CD4-positive, alpha-beta memory T cell (primary cell): ENCODE measurements at regions of chr13 and their contacts with region 1.

Region 1: DNA sequence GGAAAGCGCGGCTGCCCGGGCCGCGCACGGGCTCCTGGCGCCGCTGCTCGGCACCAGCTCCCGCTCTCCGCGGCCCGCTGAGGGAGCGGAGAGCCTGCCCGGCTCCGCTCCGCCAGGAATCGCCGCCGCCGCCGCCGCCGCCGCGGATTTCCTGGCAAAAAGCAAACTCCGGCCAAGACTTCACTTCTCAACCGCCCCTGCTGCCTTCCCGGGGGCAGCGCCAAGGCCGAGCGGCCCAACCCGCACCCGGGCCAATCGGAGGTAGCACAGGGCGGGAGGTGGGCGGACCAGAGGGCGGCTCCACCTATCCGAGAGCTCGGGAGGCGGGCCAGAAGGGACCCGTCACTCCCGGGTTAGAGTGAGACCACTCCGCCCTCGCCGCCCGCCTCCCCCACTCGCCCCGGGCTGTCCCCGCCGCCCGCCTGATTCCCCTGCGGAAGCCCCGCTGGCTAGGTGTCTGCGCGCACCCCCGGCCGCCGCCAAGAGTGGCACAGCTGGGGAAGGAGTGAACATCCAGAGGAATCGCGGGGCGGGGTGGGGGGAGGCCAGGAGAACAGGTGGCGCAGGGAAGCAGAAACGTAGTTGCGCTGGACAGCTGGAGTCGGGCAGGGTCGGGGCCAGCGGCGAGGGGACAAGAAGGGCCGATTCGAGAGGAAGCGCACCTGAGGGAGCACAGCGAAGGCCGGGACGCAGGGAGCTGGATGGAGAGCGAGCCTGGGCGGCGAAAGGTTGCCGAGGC is at the start of gene LNX2:
- DNase-seq: peak; percentile 95
- H3K4me3 ChIP-seq: peak within 1 kb of the TSS; percentile 66 to 95
- H3K4me3 Mint-ChIP-seq: peak within 1 kb of the TSS; percentile 90 to 97 (median 96)
- H3K27ac ChIP-seq: peak within 1 kb of the TSS; percentile 90
- H3K27ac Mint-ChIP-seq: peak within 1 kb of the TSS; percentile 95 to 98 (median 97)
- H3K4me1 ChIP-seq: peaks cover 60% of the 10 kb centered on the region
- H3K4me1 Mint-ChIP-seq: peaks cover 42 to 74% (median 59%) of the 10 kb centered on the region in 4 donors
- H3K27me3 ChIP-seq: no peaks in the 10 kb centered on the region
- H3K27me3 Mint-ChIP-seq: no peaks in the 10 kb centered on the region
- total RNA-seq, gene LNX2: 11.8 to 13.0 TPM

Region 2: DNA sequence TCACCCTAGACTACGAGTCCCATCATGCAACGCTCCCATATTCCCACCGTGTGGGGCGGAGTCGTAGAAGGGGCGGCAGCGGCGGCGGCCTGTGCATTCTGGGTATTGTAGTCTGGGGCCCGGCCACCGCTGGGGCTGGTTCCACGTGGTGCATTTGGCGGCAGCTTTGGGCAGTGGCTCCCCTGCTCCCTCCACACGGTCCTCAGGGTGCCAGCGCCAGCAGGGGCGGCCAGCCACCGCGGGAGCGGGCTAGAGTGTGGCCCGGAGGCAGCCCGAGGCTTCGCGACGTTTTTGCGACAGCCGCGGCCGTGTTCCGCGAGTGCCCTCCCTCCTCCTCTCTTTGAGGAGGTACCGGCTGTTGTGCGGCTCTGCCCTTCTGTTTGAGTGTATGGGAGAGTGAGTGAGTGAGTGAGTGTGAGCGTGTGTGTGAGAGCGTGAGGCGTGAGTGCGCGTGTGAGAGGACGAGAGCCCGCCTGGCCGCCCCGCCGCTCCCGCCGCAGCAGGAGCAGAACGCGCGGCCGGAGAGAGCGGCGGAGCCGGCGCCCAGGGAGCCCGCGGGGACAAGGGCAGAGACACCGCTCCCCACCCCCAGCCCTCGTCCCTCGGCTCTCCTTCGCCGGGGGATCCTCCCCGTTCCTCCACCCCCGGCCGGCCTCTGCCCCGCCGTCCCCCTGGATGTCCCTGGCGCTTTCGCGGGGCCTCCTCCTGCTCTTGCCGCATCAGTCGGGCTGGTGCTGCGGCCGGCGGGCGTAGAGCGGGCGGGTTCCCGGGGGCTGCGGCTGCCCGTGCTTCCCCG is 1366.6 kb before region 1 on chr13 and contains the start of gene CDK8:
- CTCF ChIA-PET with region 1: no interaction called
- POLR2A ChIA-PET with region 1: no interaction called
- intact Hi-C with region 1: loop called (anchors 2 kb)
- DNase-seq: peak; percentile 91 to 95 (median 92)
- H3K4me3 ChIP-seq: peak within 1 kb of the TSS; percentile 55 to 87
- H3K4me3 Mint-ChIP-seq: peak within 1 kb of the TSS; percentile 91 to 100 (median 94)
- H3K27ac ChIP-seq: peak within 1 kb of the TSS; percentile 58
- H3K27ac Mint-ChIP-seq: peak within 1 kb of the TSS; percentile 86 to 99 (median 93)
- H3K4me1 ChIP-seq: peaks cover 18% of the 10 kb centered on the region
- H3K4me1 Mint-ChIP-seq: peaks cover 29 to 44% (median 30%) of the 10 kb centered on the region in 4 donors
- H3K27me3 ChIP-seq: no peaks in the 10 kb centered on the region
- H3K27me3 Mint-ChIP-seq: peaks cover 0 to 1% of the 10 kb centered on the region in 2 donors
- total RNA-seq, gene CDK8: 10.4 to 11.7 TPM

Region 3: DNA sequence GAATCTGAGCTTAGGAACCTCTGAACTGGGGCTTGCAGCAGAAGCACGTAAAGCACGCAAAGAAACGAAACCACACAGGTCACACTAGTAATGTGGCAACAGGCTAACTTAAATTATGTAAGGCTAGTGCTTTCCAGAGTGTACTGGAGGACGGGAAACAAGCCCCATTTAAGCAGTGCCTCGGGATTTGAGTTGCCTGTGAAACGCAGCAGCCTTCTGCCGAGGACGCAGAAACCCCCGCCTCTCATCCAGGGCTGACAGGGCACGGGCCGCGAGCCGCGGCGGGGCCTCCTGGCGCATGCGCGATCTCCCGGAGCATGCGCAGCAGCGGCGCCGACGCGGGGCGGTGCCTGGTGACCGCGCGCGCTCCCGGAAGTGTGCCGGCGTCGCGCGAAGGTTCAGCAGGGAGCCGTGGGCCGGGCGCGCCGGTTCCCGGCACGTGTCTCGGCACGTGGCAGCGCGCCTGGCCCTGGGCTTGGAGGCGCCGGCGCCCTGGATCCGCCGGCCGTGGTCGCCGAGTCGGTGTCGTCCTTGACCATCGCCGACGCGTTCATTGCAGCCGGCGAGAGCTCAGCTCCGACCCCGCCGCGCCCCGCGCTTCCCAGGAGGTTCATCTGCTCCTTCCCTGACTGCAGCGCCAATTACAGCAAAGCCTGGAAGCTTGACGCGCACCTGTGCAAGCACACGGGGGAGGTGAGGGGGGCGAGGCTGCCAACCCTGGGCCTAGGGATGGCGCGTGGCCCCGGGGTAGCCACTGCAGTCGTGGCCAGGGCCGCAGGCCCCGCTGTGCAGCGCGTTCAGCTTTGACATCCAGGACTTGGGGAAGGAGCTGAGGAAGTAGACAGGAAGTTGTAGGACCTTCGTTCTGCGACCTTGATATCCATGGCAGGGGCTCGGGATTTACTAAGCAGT is 196.0 kb before region 1 on chr13 and contains the start of gene GTF3A:
- CTCF ChIA-PET with region 1: interaction called, 14 read pairs
- POLR2A ChIA-PET with region 1: interaction called, 135 read pairs
- intact Hi-C with region 1: loop called (anchors 1 kb)
- DNase-seq: peak; percentile 85 to 96 (median 92)
- H3K4me3 ChIP-seq: peak within 1 kb of the TSS; percentile 66 to 89
- H3K4me3 Mint-ChIP-seq: peak within 1 kb of the TSS; percentile 87 to 96 (median 94)
- H3K27ac ChIP-seq: peak within 1 kb of the TSS; percentile 95
- H3K27ac Mint-ChIP-seq: peak within 1 kb of the TSS; percentile 89 to 99 (median 97)
- H3K4me1 ChIP-seq: peaks cover 51% of the 10 kb centered on the region
- H3K4me1 Mint-ChIP-seq: peaks cover 27 to 53% (median 40%) of the 10 kb centered on the region in 4 donors
- H3K27me3 ChIP-seq: no peaks in the 10 kb centered on the region
- H3K27me3 Mint-ChIP-seq: no peaks in the 10 kb centered on the region
- total RNA-seq, gene GTF3A: 225 to 236 TPM

Region 4: DNA sequence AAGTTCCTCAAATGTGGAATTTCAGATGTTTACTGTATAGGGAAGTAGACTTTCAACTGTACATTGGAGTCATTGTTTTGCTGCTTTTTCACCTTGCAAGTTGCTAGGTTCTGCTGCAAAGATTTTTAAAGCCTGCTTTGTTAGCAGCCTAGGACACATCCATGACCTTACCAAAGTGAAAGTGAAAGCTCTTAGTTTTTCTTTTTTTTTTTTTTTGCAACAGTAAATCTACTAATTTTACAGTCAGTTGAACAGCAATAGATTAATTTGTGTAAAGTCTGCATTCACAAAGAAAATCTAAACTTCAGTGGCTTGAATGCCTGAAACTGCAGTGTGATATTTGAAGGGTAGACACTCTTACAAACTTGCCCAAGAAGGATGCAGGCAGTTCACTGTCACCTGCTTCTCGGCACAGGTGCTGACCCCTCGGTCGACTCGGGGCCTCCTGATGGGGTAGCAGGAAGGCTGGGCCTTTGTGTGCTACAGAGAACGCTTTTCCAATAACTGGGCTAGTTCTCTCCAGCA is 165.2 kb before region 1 on chr13:
- CTCF ChIA-PET with region 1: interaction called, 4 read pairs
- POLR2A ChIA-PET with region 1: interaction called, 64 read pairs
- intact Hi-C with region 1: loop called (anchors 1 kb)
- DNase-seq: peak in 4 of 5 donors; percentile 33 to 40 (median 36)
- H3K4me3 ChIP-seq: peak overlapping the region; percentile 48 to 59
- H3K4me3 Mint-ChIP-seq: peak overlapping the region; percentile 89 to 98 (median 94)
- H3K27ac ChIP-seq: peak overlapping the region; percentile 73
- H3K27ac Mint-ChIP-seq: peak overlapping the region; percentile 96 to 99 (median 98)
- H3K4me1 ChIP-seq: peaks cover 32% of the 10 kb centered on the region
- H3K4me1 Mint-ChIP-seq: peaks cover 16 to 44% (median 29%) of the 10 kb centered on the region in 4 donors
- H3K27me3 ChIP-seq: no peaks in the 10 kb centered on the region
- H3K27me3 Mint-ChIP-seq: peaks cover 0 to 2% of the 10 kb centered on the region in 2 donors

Region 5: DNA sequence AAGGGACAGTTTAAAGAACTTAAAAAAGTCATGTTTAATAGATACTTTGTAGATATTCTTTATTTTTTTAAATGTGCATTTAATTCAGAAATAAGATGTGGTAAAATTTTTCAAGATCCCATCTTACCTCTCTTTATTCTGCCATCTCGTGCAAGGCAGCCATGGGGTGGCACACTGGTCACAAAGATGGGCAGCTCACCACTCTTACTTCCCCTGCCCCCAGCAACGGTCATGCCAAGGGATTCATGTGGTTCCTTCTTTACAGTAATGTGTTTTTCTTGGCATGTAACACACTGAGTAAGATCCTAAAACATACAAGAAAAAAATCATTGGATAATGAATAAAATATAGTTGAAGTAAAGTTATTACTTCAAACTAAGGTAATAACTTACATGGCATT is 64.4 kb before region 1 on chr13:
- CTCF ChIA-PET with region 1: interaction called, 3 read pairs
- POLR2A ChIA-PET with region 1: interaction called, 20 read pairs
- intact Hi-C with region 1: loop called (anchors 5 kb)
- DNase-seq: no peak
- H3K4me3 ChIP-seq: no peak overlapping the region
- H3K4me3 Mint-ChIP-seq: no peak overlapping the region
- H3K27ac ChIP-seq: no peak overlapping the region
- H3K27ac Mint-ChIP-seq: no peak overlapping the region
- H3K4me1 ChIP-seq: peaks cover 11% of the 10 kb centered on the region
- H3K4me1 Mint-ChIP-seq: peaks cover 6 to 14% (median 11%) of the 10 kb centered on the region in 4 donors
- H3K27me3 ChIP-seq: no peaks in the 10 kb centered on the region
- H3K27me3 Mint-ChIP-seq: no peaks in the 10 kb centered on the region

Region 6: DNA sequence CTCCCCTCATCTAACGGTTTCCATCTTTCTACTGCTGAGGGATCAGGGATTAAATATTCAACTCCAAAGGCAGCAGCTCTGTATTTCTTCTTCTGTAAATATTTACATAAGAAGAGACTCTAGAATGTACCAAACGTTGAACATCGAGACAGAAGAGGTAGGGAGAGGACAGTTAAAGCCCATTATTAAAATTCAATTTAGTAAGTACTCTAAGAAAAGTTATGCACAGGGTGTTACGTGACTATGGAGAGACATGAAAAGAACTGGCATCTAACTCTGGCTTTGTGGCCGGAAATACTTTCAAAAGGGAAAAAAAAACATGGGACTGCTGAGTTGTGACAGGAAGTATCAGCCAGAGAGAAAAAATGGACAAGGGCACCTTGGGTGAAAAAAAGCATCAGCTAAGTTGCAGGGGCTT is 36.9 kb before region 1 on chr13:
- CTCF ChIA-PET with region 1: no interaction called
- POLR2A ChIA-PET with region 1: interaction called, 7 read pairs
- intact Hi-C with region 1: loop called (anchors 5 kb)
- DNase-seq: peak in 4 of 5 donors; percentile 8 to 14 (median 12)
- H3K4me3 ChIP-seq: no peak overlapping the region
- H3K4me3 Mint-ChIP-seq: peak overlapping the region in 6 of 8 donors; percentile 0 to 78 (median 46)
- H3K27ac ChIP-seq: no peak overlapping the region
- H3K27ac Mint-ChIP-seq: peak overlapping the region in 4 of 7 donors; percentile 5 to 49 (median 24)
- H3K4me1 ChIP-seq: peaks cover 13% of the 10 kb centered on the region
- H3K4me1 Mint-ChIP-seq: peaks cover 24 to 43% (median 32%) of the 10 kb centered on the region in 4 donors
- H3K27me3 ChIP-seq: no peaks in the 10 kb centered on the region
- H3K27me3 Mint-ChIP-seq: no peaks in the 10 kb centered on the region

Region 7: DNA sequence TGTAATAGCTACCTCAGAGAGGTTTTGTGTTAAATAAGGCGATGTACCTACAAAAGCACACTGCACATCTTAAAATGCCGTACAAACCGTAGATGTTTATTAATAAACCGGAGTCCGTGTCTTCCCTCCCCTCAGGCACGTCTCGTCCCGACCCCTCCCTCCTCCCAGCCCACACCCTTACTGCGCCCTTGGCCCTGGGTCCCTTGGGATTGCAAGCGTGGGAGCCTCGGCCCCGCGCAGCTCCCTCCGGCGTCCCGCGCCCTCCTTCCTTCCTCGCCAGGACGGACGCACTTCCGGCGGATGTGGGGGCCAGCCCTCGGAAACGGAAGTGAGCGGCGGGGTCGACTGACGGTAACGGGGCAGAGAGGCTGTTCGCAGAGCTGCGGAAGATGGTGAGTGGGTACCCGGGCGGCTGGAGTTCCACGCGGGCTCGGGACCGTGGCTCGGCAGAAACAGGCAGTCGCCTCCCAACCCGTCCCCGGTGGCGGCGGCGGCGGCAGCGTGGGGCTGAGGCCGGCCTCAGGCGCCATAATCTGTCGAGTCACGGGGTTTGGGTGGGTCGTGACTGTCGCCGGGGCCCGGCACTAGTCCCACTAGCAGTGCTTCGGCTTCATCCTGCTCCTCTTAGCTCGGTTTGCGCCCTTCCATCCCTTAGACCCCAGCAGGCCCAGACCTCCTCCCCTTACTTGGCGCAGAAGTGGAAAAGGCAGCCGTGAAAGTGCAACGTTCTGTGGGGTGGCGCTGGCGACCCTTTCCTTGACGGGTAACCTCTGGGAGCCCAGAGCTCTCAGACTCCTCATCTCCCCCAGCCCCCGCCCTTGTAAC is 1038.5 kb after region 1 on chr13 and contains the start of gene POMP:
- CTCF ChIA-PET with region 1: no interaction called
- POLR2A ChIA-PET with region 1: interaction called, 5 read pairs
- intact Hi-C with region 1: loop called (anchors 10 kb)
- DNase-seq: peak; percentile 90 to 94 (median 93)
- H3K4me3 ChIP-seq: peak within 1 kb of the TSS; percentile 76 to 93
- H3K4me3 Mint-ChIP-seq: peak within 1 kb of the TSS; percentile 95 to 99 (median 98)
- H3K27ac ChIP-seq: peak within 1 kb of the TSS; percentile 95
- H3K27ac Mint-ChIP-seq: peak within 1 kb of the TSS; percentile 96 to 100 (median 98)
- H3K4me1 ChIP-seq: peaks cover 40% of the 10 kb centered on the region
- H3K4me1 Mint-ChIP-seq: peaks cover 34 to 63% (median 54%) of the 10 kb centered on the region in 4 donors
- H3K27me3 ChIP-seq: no peaks in the 10 kb centered on the region
- H3K27me3 Mint-ChIP-seq: no peaks in the 10 kb centered on the region
- total RNA-seq, gene POMP: 23.0 to 24.5 TPM